HEK293 (cell line): ENCODE measurements at regions of chr1 and their contacts with region 1.

Region 1: DNA sequence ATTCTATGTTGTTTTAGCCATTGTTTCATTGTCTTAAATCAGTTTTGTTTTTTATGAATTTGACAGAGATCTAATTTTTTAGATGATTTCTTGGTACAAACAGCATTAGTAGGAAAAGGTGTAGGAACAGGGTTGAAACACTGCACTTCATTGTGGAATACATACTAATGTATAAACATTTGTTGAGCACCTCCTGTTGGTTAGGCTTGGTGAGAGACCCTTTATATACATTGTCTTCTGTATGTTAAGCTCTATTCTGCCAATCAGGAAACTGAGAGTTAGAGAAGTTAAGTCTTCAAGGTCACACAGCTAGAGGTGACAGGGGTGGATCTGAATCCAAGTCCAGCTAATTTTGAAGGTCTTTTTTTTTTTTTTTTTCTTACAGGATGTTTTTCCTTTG is 192.7 kb downstream of the VPS13D start:
- H3K4me3 ChIP-seq: no peak overlapping the region
- H3K27ac ChIP-seq: no peak overlapping the region
- H3K4me1 ChIP-seq: no peaks in the 10 kb centered on the region
- CTCF ChIP-seq: no peak

Region 2: DNA sequence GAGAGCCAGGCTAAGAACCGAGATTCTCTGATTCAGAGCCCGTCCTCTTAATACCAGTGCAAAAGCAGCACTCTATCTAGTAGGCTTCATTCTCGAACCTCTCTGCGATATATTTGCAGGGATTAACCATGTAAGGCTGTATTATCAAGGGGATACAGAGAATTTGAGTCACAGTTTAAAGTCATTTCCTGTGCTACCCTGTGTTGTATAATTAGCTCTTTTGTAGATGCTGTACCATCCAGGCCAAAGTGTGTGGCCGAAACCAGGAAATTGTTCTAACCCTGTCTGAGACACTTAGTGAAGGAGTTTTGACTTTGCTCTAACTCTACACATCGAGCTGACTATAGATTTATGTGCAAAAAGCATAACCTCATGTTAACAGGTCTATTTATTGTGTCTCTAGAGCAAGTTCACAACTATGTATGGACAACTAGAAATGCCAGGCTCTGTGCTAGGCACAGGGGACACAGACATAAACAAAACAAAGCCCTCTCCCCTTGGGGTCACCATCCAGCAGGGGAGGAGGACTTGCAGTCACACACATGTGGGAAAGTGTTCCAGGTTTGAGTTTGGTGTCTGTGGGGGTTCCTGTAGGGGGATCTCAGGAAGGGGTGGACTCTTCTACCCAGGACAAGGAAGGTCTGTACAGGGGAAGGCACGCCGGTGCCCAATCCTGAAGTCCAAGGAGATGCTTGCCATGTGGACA is 13.3 kb after region 1 on chr1:
- CTCF ChIA-PET with region 1: interaction called, 11 read pairs
- POLR2A ChIA-PET with region 1: interaction called, 3 read pairs
- H3K4me3 ChIP-seq: no peak overlapping the region
- H3K27ac ChIP-seq: no peak overlapping the region
- H3K4me1 ChIP-seq: peaks cover 16% of the 10 kb centered on the region
- CTCF ChIP-seq: no peak